Right ventricle myocardium superior (tissue), 1 donor: ENCODE measurements at regions of chr13 and their contacts with region 1.

Region 1: GRCh38 chr13:103130681-103131210 is 64.5 kb upstream of the SLC10A2 start:
- DNase-seq: no peak
- ATAC-seq: no peak

Region 2: GRCh38 chr13:102913914-102914313 is 216.8 kb before region 1 on chr13:
- intact Hi-C with region 1: loop called (anchors 10 kb)
- DNase-seq: no peak
- ATAC-seq: no peak

Region 3: GRCh38 chr13:103078145-103078544 is 52.6 kb before region 1 on chr13:
- intact Hi-C with region 1: no loop called
- DNase-seq: no peak
- ATAC-seq: no peak